Heart right ventricle (tissue), 16 donors: ENCODE measurements at regions of chr14 and their contacts with region 1.

Region 1: GRCh38 chr14:23154964-23155587 is 28.4 kb downstream of the SLC7A8 start:
- DNase-seq: peak; percentile 71 to 80
- ATAC-seq: peak; percentile 75 to 89 (median 86)
- H3K4me3 ChIP-seq: peak overlapping the region in 7 of 10 donors; percentile 4 to 46 (median 32)
- H3K27ac ChIP-seq: peak overlapping the region; percentile 80 to 97 (median 90)
- H3K4me1 ChIP-seq: peaks cover 4 to 44% (median 26%) of the 10 kb centered on the region in 9 donors
- H3K27me3 ChIP-seq: no peaks in the 10 kb centered on the region
- CTCF ChIP-seq: peak in 1 of 9 donors; percentile 16

Region 2: GRCh38 chr14:23104591-23105347 is 50.3 kb before region 1 on chr14 and contains the start of gene CIROP:
- intact Hi-C with region 1: no loop called
- DNase-seq: no peak
- ATAC-seq: no peak
- H3K4me3 ChIP-seq: no peak within 1 kb of the TSS
- H3K27ac ChIP-seq: no peak within 1 kb of the TSS
- H3K4me1 ChIP-seq: peaks cover 0 to 15% (median under 1%) of the 10 kb centered on the region in 9 donors
- H3K27me3 ChIP-seq: peaks cover 0 to 2% (median 0%) of the 10 kb centered on the region in 7 donors
- CTCF ChIP-seq: no peak
- total RNA-seq, gene CIROP: not detected

Region 3: GRCh38 chr14:23141671-23142451 is 13.2 kb before region 1 on chr14:
- intact Hi-C with region 1: loop called in 1 of 10 experiments (anchors 1 kb)
- DNase-seq: peak; percentile 73 to 80
- ATAC-seq: peak; percentile 83 to 97 (median 92)
- H3K4me3 ChIP-seq: no peak overlapping the region
- H3K27ac ChIP-seq: peak overlapping the region; percentile 15 to 79 (median 62)
- H3K4me1 ChIP-seq: peaks cover 0 to 31% (median 13%) of the 10 kb centered on the region in 9 donors
- H3K27me3 ChIP-seq: no peaks in the 10 kb centered on the region
- CTCF ChIP-seq: no peak